Upper lobe of right lung (tissue), 1 donor: ENCODE measurements at regions of chr3 and their contacts with region 1.

Region 1: DNA sequence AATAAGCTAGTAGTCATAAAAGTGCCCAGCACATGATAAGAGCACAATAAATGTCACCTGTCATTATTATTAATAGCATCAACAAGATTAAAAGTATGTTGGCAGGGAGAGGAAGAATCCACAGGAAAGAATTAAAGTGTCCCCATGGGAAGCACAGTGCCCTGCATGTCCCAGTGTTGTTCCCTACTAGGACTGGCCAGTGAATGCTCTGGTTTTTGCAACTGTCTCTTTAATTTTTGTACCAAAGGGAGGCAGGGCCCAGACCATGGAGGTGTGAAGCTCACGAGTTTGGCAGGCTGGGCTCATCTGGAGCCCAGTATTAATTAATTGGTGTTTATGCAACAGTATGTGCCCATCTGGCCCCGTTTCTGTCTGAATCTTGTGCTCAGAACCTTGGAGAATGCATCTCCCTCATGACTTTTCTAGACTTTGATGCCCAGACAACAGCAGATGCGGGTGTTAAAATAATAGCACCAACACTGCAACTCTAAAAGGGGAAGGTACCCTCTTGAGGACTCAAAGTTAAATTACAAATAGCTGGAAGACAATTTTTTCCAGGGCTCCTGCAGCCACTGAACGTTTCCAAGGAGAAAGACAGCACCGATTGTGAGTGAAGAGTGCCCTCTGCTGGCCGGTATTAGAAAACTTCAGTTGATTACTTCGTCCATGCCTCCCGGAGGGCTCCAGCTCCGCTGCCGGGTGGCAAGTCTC is 71.9 kb upstream of the SPATA12 start:
- DNase-seq: no peak
- ATAC-seq: peak; percentile 89
- H3K4me3 ChIP-seq: no peak overlapping the region
- H3K27ac ChIP-seq: no peak overlapping the region
- H3K4me1 ChIP-seq: no peaks in the 10 kb centered on the region
- H3K27me3 ChIP-seq: no peaks in the 10 kb centered on the region
- CTCF ChIP-seq: peak; percentile 80

Region 2: GRCh38 chr3:56801662-56802377 is 186.8 kb before region 1 on chr3 and contains the start of gene ARHGEF3:
- intact Hi-C with region 1: loop called (anchors 10 kb)
- DNase-seq: peak; percentile 95
- ATAC-seq: peak; percentile 97
- H3K4me3 ChIP-seq: peak within 1 kb of the TSS; percentile 89
- H3K27ac ChIP-seq: peak within 1 kb of the TSS; percentile 77
- H3K4me1 ChIP-seq: peaks cover 30% of the 10 kb centered on the region
- H3K27me3 ChIP-seq: no peaks in the 10 kb centered on the region
- CTCF ChIP-seq: peak; percentile 56
- total RNA-seq, gene ARHGEF3: 37.5 TPM